Activated CD4-positive, alpha-beta T cell treated with anti-CD3 and anti-CD28 coated beads for 36 hours (primary cell): ENCODE measurements at regions of chr14 and their contacts with region 1.

Region 1: DNA sequence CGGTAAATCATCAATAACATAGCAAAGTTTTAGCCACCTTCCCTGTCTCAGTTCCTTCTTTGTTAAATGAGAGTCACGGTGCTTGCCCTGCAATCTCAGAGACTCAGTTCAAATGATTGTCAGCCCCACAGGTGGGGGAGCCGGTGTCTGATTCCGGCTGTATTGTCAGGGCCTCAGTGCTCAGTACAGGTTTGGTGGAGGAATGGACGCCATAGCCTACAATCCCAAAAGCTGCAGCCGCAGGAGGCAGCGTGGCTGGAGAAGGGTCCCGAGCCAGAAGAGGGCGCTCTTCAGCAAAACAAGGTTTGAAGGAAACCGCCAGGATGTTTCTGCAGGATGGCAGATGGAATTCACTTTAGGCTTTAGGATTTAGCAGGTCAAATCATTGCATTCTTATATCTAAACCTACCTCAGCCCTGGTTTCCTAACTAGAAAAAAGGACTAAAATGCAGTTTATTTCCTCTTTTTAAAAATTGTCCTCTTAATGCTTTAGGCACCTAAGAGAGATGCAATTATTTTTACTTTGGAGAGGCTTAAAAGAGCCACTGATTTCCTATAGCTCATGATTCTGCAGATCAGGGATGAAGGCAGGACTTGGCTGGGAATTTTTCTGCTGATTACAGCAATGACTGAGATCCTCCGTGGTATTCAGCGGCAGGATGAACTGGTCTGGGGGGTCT is 29.2 kb downstream of the FOS start:
- DNase-seq: peak; percentile 89
- ATAC-seq: peak; percentile 73
- H3K4me3 Mint-ChIP-seq: no peak overlapping the region
- H3K27ac Mint-ChIP-seq: no peak overlapping the region
- H3K4me1 Mint-ChIP-seq: peaks cover 14% of the 10 kb centered on the region
- H3K27me3 Mint-ChIP-seq: no peaks in the 10 kb centered on the region

Region 2: GRCh38 chr14:74945823-74946682 is 361.8 kb before region 1 on chr14:
- CTCF ChIA-PET with region 1: no interaction called
- POLR2A ChIA-PET with region 1: no interaction called
- intact Hi-C with region 1: loop called in 1 of 2 experiments (anchors 1 kb)
- DNase-seq: peak; percentile 87
- ATAC-seq: peak; percentile 69
- H3K4me3 Mint-ChIP-seq: no peak overlapping the region
- H3K27ac Mint-ChIP-seq: no peak overlapping the region
- H3K4me1 Mint-ChIP-seq: peaks cover 28% of the 10 kb centered on the region
- H3K27me3 Mint-ChIP-seq: no peaks in the 10 kb centered on the region

Region 3: GRCh38 chr14:75132382-75133086 is 175.3 kb before region 1 on chr14:
- CTCF ChIA-PET with region 1: interaction called, 221 read pairs
- POLR2A ChIA-PET with region 1: no interaction called
- intact Hi-C with region 1: loop called (anchors 1 kb)
- DNase-seq: peak; percentile 53
- ATAC-seq: peak; percentile 82
- H3K4me3 Mint-ChIP-seq: no peak overlapping the region
- H3K27ac Mint-ChIP-seq: peak overlapping the region; percentile 33
- H3K4me1 Mint-ChIP-seq: peaks cover 18% of the 10 kb centered on the region
- H3K27me3 Mint-ChIP-seq: no peaks in the 10 kb centered on the region

Region 4: GRCh38 chr14:75452900-75453747 is 145.3 kb after region 1 on chr14:
- CTCF ChIA-PET with region 1: interaction called, 5 read pairs
- POLR2A ChIA-PET with region 1: no interaction called
- intact Hi-C with region 1: loop called (anchors 1 to 5 kb)
- DNase-seq: no peak
- ATAC-seq: no peak
- H3K4me3 Mint-ChIP-seq: no peak overlapping the region
- H3K27ac Mint-ChIP-seq: no peak overlapping the region
- H3K4me1 Mint-ChIP-seq: no peaks in the 10 kb centered on the region
- H3K27me3 Mint-ChIP-seq: no peaks in the 10 kb centered on the region

Region 5: GRCh38 chr14:75566321-75566720 is 258.5 kb after region 1 on chr14:
- CTCF ChIA-PET with region 1: interaction called, 10 read pairs
- POLR2A ChIA-PET with region 1: no interaction called
- intact Hi-C with region 1: loop called (anchors 2 kb)
- DNase-seq: peak; percentile 94
- ATAC-seq: peak; percentile 82
- H3K4me3 Mint-ChIP-seq: peak overlapping the region; percentile 72
- H3K27ac Mint-ChIP-seq: peak overlapping the region; percentile 98
- H3K4me1 Mint-ChIP-seq: peaks cover 86% of the 10 kb centered on the region
- H3K27me3 Mint-ChIP-seq: no peaks in the 10 kb centered on the region